CD4-positive, alpha-beta T cell (primary cell): ENCODE measurements at regions of chr6 and their contacts with region 1.

Region 1: GRCh38 chr6:134640975-134641429 is 308.9 kb downstream of the ALDH8A1 start:
- DNase-seq: peak; percentile 63 to 89 (median 72)
- ATAC-seq: peak; percentile 97
- H3K4me3 ChIP-seq: no peak overlapping the region
- H3K4me3 Mint-ChIP-seq: no peak overlapping the region
- H3K27ac ChIP-seq: no peak overlapping the region
- H3K27ac Mint-ChIP-seq: no peak overlapping the region
- H3K4me1 ChIP-seq: peaks cover 4% of the 10 kb centered on the region
- H3K4me1 Mint-ChIP-seq: peaks cover 11% of the 10 kb centered on the region
- H3K27me3 ChIP-seq: no peaks in the 10 kb centered on the region
- H3K27me3 Mint-ChIP-seq: no peaks in the 10 kb centered on the region
- CTCF ChIP-seq: peak; percentile 97

Region 2: GRCh38 chr6:134166511-134167261 is 474.3 kb before region 1 on chr6:
- CTCF ChIA-PET with region 1: interaction called, 22 read pairs
- POLR2A ChIA-PET with region 1: interaction called, 6 read pairs
- intact Hi-C with region 1: no loop called
- DNase-seq: no peak
- ATAC-seq: no peak
- H3K4me3 ChIP-seq: no peak overlapping the region
- H3K4me3 Mint-ChIP-seq: no peak overlapping the region
- H3K27ac ChIP-seq: no peak overlapping the region
- H3K27ac Mint-ChIP-seq: no peak overlapping the region
- H3K4me1 ChIP-seq: peaks cover 16% of the 10 kb centered on the region
- H3K4me1 Mint-ChIP-seq: peaks cover 29% of the 10 kb centered on the region
- H3K27me3 ChIP-seq: no peaks in the 10 kb centered on the region
- H3K27me3 Mint-ChIP-seq: no peaks in the 10 kb centered on the region
- CTCF ChIP-seq: no peak

Region 3: GRCh38 chr6:134529921-134530320 is 111.1 kb before region 1 on chr6:
- CTCF ChIA-PET with region 1: no interaction called
- POLR2A ChIA-PET with region 1: no interaction called
- intact Hi-C with region 1: loop called in 1 of 2 experiments (anchors 10 kb)
- DNase-seq: peak in 4 of 14 experiments; percentile 41 to 76 (median 62)
- ATAC-seq: peak; percentile 87
- H3K4me3 ChIP-seq: no peak overlapping the region
- H3K4me3 Mint-ChIP-seq: no peak overlapping the region
- H3K27ac ChIP-seq: no peak overlapping the region
- H3K27ac Mint-ChIP-seq: peak overlapping the region; percentile 71
- H3K4me1 ChIP-seq: peaks cover 10% of the 10 kb centered on the region
- H3K4me1 Mint-ChIP-seq: peaks cover 32% of the 10 kb centered on the region
- H3K27me3 ChIP-seq: no peaks in the 10 kb centered on the region
- H3K27me3 Mint-ChIP-seq: no peaks in the 10 kb centered on the region
- CTCF ChIP-seq: no peak

Region 4: DNA sequence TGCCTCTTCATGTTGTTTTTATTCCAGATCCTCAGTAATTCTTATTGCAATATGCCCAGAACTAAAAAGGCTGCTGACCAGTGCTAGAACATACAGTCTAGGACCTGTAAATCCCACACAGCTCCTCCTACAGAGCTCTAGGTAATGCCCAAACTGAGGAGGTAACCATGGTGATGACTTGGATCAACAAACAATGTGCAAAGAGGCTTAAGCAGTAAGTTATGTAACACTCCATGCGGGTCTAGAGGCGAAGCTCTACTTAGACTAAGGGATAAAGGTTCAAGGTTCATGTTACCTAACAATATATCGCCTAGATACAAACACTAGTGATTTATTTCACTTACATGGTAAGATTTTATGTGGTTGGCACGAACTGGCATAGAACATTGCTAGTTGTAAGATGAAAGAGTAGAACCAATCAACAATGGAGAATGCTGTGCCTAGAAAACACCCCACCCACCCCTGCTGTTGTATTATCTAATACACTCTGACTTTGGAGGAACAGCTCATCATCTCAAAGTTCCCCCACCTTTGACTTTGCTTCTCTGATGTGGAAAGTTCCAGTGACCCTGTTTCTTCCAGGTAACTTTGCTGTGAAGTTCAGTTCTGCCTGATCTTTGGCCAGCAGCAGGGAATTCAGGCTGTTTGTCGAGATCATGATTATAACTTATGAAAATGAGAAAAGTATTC is 66.5 kb after region 1 on chr6:
- CTCF ChIA-PET with region 1: no interaction called
- POLR2A ChIA-PET with region 1: no interaction called
- intact Hi-C with region 1: no loop called
- DNase-seq: peak in 2 of 14 experiments; percentile 11 to 29
- ATAC-seq: peak; percentile 24
- H3K4me3 ChIP-seq: no peak overlapping the region
- H3K4me3 Mint-ChIP-seq: no peak overlapping the region
- H3K27ac ChIP-seq: no peak overlapping the region
- H3K27ac Mint-ChIP-seq: no peak overlapping the region
- H3K4me1 ChIP-seq: no peaks in the 10 kb centered on the region
- H3K4me1 Mint-ChIP-seq: no peaks in the 10 kb centered on the region
- H3K27me3 ChIP-seq: peaks cover 0 to 2% of the 10 kb centered on the region in 2 experiments
- H3K27me3 Mint-ChIP-seq: peaks cover 25% of the 10 kb centered on the region
- CTCF ChIP-seq: no peak

Region 5: DNA sequence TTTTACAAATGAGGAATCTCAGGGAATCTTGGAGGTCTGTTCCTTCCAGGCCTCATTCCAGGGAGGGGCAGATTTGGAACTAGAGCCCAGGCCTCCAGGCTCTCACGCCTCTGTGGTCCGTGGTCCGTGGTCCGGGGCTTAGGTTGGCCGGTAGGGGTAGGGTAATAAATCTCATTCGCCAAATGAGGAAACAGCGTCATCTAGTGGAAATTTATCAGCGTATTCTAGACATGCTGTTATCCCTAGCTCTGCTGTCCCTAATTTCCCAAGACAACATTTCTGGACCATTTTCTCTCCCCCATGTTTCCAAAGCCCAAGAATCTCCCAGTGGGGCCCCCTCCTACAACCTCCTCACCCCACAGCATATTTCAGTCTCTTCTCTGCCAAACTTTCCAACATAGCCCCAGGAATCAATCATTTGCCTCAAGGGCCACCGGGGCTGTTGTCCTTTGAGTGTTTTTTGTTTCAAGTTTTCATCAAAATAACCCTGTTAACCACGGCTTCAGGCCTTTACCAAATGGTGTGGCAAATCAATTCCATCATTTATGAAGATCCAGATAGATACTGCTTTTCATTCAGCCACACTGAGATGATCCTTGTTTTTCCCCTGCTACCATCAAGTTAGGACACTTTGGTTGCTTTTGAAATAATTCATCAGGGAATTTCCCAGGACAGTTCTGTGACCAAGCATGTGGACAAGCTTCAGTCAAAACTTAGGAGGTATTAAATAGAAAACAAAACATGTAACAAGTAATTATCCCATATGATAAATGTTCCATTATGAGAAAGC is 182.1 kb after region 1 on chr6:
- CTCF ChIA-PET with region 1: interaction called, 4 read pairs
- POLR2A ChIA-PET with region 1: no interaction called
- intact Hi-C with region 1: loop called (anchors 2 kb)
- DNase-seq: peak in 6 of 14 experiments; percentile 3 to 81 (median 53)
- ATAC-seq: peak; percentile 74
- H3K4me3 ChIP-seq: no peak overlapping the region
- H3K4me3 Mint-ChIP-seq: no peak overlapping the region
- H3K27ac ChIP-seq: no peak overlapping the region
- H3K27ac Mint-ChIP-seq: no peak overlapping the region
- H3K4me1 ChIP-seq: no peaks in the 10 kb centered on the region
- H3K4me1 Mint-ChIP-seq: no peaks in the 10 kb centered on the region
- H3K27me3 ChIP-seq: no peaks in the 10 kb centered on the region
- H3K27me3 Mint-ChIP-seq: no peaks in the 10 kb centered on the region
- CTCF ChIP-seq: peak; percentile 72

Region 6: DNA sequence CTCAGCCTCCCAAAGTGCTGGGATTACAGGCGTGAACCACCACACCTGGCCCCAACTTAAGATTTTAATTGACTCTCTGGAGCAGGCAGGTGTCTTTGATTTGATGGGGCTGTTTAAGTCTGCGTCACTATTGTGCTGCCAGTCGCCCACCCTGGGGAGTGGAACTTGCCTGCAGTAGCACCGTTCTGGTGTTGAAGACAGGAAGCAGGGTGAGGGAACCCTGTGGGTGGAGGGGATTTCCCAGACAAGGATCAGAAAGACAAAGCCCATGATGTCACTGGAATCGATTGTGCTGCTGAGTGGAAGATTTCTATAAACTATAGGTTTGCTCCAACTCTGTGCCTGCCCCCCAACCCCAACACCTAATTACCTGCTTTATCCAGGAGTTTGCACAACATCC is 297.9 kb after region 1 on chr6:
- CTCF ChIA-PET with region 1: interaction called, 4 read pairs
- POLR2A ChIA-PET with region 1: interaction called, 3 read pairs
- intact Hi-C with region 1: loop called (anchors 2 kb)
- DNase-seq: peak in 9 of 14 experiments; percentile 2 to 74 (median 17)
- ATAC-seq: peak; percentile 91
- H3K4me3 ChIP-seq: no peak overlapping the region
- H3K4me3 Mint-ChIP-seq: no peak overlapping the region
- H3K27ac ChIP-seq: no peak overlapping the region
- H3K27ac Mint-ChIP-seq: no peak overlapping the region
- H3K4me1 ChIP-seq: peaks cover 6% of the 10 kb centered on the region
- H3K4me1 Mint-ChIP-seq: peaks cover 12% of the 10 kb centered on the region
- H3K27me3 ChIP-seq: no peaks in the 10 kb centered on the region
- H3K27me3 Mint-ChIP-seq: no peaks in the 10 kb centered on the region
- CTCF ChIP-seq: no peak